Activated B cell treated with CpG ODN at 0.5 μM for 24 hours (primary cell): ENCODE measurements at regions of chr10 and their contacts with region 1.

Region 1: DNA sequence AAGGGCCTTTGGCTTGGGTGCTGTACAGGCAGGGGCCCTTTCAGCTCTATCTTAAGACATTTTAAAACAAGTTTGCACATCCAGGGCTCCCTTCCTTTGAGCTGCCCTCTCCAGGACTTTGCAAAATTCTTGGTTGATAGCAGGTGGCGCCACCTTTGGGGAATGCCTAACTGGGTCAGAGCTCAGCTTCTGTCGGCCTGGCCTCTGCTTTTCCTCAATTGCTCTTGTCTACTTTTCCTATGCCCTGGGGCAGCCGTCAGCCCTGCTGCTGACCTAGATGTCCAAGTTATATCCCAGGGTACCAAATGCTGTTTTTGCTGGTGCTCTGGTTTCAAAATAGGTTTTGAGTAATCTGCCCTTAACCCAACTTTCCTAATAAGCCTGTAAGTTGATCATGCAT is 65.8 kb downstream of the APBB1IP start:
- DNase-seq: no peak
- ATAC-seq: no peak
- H3K4me3 Mint-ChIP-seq: no peak overlapping the region
- H3K27ac Mint-ChIP-seq: peak overlapping the region; percentile 50
- H3K4me1 Mint-ChIP-seq: peaks cover 11% of the 10 kb centered on the region
- H3K27me3 Mint-ChIP-seq: no peaks in the 10 kb centered on the region
- CTCF ChIP-seq: no peak

Region 2: GRCh38 chr10:26540601-26541000 is 36.7 kb after region 1 on chr10:
- CTCF ChIA-PET with region 1: no interaction called
- POLR2A ChIA-PET with region 1: no interaction called
- intact Hi-C with region 1: loop called (anchors 5 kb)
- DNase-seq: no peak
- ATAC-seq: peak; percentile 62
- H3K4me3 Mint-ChIP-seq: no peak overlapping the region
- H3K27ac Mint-ChIP-seq: peak overlapping the region; percentile 75
- H3K4me1 Mint-ChIP-seq: peaks cover 33% of the 10 kb centered on the region
- H3K27me3 Mint-ChIP-seq: no peaks in the 10 kb centered on the region
- CTCF ChIP-seq: no peak